Prostate gland (tissue), 2 donors: ENCODE measurements at regions of chr19 and their contacts with region 1.

Region 1: DNA sequence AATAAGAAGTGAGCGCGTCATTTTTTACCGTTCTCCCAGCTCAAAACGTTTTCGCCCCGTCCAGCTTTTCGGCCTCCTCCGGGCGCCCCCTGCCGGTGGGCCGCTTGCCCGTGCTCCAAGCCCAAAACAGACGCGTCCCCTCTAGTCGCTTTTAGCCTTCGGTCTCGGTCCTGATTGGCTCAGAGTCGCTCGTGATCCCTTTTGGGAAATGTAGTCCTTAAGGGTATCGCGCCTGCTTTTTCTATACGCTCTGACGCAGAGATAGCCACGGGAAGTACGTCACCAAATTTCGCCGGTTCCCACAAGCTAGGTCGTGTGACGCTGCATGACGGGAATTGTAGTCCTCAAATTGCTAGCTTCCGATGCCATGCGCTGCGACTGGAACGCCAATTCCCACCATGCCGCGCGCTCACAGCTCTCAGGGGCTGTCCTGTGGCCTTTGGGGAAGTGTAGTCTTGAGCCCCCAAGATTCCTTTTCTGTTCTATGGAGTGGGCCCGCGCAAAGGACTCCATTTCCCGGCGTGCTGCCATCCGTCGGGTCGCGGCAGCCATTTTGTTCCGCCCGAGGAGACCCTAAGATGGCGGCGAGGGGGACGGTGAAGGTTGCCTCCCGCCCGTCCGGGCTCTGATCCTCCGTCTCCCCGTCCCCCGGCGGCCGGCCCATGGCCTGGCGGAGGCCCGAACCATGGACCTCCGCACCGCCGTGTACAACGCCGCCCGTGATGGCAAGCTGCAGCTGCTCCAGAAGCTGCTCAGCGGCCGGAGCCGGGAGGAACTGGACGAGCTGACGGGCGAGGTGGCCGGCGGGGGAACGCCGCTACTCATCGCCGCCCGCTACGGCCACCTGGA is at the start of gene FEM1A:
- DNase-seq: peak; percentile 100
- H3K4me3 ChIP-seq: peak within 1 kb of the TSS; percentile 92 to 94
- H3K27ac ChIP-seq: peak within 1 kb of the TSS; percentile 89 to 90
- H3K4me1 ChIP-seq: peaks cover 21% of the 10 kb centered on the region
- H3K27me3 ChIP-seq: no peaks in the 10 kb centered on the region
- CTCF ChIP-seq: peak; percentile 90 to 100 (median 98)
- POLR2A ChIP-seq: peak; percentile 72
- total RNA-seq, gene FEM1A: 20.7 to 30.4 TPM

Region 2: DNA sequence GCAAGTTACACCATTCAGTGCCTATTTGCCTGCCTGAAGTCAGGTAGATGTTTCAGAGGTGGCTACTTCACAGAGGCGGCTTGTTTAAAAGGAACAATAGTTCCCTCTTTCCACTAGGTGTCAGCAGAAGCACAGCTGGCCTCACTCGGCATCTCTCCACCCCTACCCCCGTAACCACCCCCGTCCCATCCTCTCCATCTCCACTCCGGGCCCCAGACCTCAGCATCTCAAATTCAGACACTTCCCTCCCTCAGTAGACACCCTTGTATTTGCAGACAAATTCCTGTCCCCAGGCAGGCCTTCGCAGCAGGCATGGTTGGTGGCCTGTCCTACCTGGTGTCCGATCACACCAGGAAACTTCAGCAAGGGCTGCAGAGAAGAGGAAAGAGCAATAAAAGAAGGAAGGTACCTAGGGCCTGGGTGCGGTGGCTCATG is 58.7 kb before region 1 on chr19:
- intact Hi-C with region 1: loop called (anchors 5 kb)
- DNase-seq: peak; percentile 31
- H3K4me3 ChIP-seq: no peak overlapping the region
- H3K27ac ChIP-seq: no peak overlapping the region
- H3K4me1 ChIP-seq: no peaks in the 10 kb centered on the region
- H3K27me3 ChIP-seq: no peaks in the 10 kb centered on the region
- CTCF ChIP-seq: peak in 3 of 4 experiments; percentile 57 to 64 (median 58)
- POLR2A ChIP-seq: no peak